ENCODE measurements at regions of chr16 and their contacts with region 1.

Region 1: GRCh38 chr16:19086322-19087199 is 19.1 kb downstream of the COQ7 start:
- DNase-seq: peak; percentile 90
- ATAC-seq: peak; percentile 98
- H3K4me3 ChIP-seq: peak overlapping the region; percentile 50 to 63
- H3K27ac ChIP-seq: peak overlapping the region; percentile 18; the same call in 1 of the 2 replicates
- H3K4me1 ChIP-seq: peaks cover 9 to 23% of the 10 kb centered on the region in 2 experiments
- H3K27me3 ChIP-seq: no peaks in the 10 kb centered on the region
- CTCF ChIP-seq: peak; percentile 94 to 98 (median 98)
- POLR2A ChIP-seq: peak; percentile 97
- RAD21 ChIP-seq: peak; percentile 100

Region 2: DNA sequence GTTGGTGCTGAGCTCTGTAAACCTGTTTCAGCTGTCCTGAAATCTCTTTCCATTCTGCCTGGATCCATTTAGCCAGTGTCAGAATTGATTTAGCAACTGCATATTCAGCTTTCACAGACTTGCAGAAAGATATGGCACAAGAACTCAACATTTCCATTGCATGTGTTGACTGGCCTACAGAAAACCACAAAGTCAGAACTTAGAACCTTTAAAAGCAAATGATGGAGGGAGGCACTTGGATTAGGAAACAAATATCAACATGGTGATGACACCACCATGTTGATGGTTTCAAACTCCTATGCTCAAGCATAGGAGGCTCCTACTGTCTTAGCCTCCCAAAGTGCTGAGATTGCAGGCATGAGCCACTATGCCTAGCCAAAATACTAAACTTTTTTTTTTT is 232.9 kb before region 1 on chr16:
- CTCF ChIA-PET with region 1: no interaction called
- POLR2A ChIA-PET with region 1: no interaction called
- RAD21 ChIA-PET with region 1: no interaction called
- intact Hi-C with region 1: no loop called
- DNase-seq: no peak
- ATAC-seq: no peak
- H3K4me3 ChIP-seq: no peak overlapping the region
- H3K27ac ChIP-seq: no peak overlapping the region
- H3K4me1 ChIP-seq: no peaks in the 10 kb centered on the region
- H3K27me3 ChIP-seq: no peaks in the 10 kb centered on the region
- CTCF ChIP-seq: no peak
- POLR2A ChIP-seq: no peak
- RAD21 ChIP-seq: no peak

Region 3: DNA sequence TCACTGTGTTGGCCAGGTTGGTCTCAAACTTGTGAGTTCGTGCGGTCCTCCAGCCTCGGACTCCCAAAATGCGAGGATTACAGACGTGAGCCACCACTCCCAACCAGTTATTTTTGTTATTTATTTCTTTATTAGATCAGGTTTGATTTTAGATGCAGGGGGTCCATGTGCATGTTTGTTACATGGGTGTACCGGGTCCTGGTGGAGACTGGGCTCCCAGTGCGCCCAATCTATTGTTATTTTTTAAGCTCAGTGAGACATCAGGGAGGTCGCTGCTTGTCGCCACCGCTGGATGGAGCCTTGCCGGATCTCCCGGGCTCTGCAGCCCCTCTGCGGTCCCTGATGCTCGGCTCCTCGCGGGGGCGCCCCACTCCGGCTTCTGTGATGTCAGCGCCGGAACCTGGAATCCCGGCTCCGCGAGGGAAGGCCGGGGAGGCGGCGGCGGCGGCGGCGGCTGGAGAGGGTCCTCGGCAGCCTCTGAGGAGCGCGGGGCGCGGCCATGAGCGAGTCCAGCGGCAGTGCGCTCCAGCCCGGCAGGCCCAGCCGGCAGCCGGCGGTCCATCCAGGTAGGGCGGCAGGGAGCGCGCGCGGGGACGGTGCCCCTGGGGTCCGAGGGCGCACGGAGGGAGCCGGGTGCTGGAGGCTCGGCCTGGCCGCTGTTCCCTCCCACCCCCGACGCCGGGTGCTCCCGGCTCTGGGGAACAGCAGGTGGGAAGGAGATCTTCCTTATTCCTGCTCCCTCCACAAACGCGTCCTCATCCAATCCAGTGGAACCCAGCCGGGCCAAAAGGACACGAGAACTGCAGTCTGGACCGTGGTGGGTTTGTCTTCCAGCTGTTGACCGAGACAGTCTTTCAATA is 102.8 kb before region 1 on chr16 and contains the start of gene TMC7:
- CTCF ChIA-PET with region 1: interaction called, 6 read pairs
- POLR2A ChIA-PET with region 1: no interaction called
- RAD21 ChIA-PET with region 1: no interaction called
- intact Hi-C with region 1: loop called (anchors 5 kb)
- DNase-seq: peak; percentile 80
- ATAC-seq: peak; percentile 94
- H3K4me3 ChIP-seq: peak within 1 kb of the TSS; percentile 58 to 68
- H3K27ac ChIP-seq: peak within 1 kb of the TSS; percentile 60
- H3K4me1 ChIP-seq: peaks cover 9 to 24% of the 10 kb centered on the region in 2 experiments; a peak in 3 of 4 replicates
- H3K27me3 ChIP-seq: no peaks in the 10 kb centered on the region
- CTCF ChIP-seq: peak; percentile 80 to 99 (median 82)
- POLR2A ChIP-seq: no peak
- RAD21 ChIP-seq: peak; percentile 97
- total RNA-seq, gene TMC7: 5.2 TPM

Region 4: DNA sequence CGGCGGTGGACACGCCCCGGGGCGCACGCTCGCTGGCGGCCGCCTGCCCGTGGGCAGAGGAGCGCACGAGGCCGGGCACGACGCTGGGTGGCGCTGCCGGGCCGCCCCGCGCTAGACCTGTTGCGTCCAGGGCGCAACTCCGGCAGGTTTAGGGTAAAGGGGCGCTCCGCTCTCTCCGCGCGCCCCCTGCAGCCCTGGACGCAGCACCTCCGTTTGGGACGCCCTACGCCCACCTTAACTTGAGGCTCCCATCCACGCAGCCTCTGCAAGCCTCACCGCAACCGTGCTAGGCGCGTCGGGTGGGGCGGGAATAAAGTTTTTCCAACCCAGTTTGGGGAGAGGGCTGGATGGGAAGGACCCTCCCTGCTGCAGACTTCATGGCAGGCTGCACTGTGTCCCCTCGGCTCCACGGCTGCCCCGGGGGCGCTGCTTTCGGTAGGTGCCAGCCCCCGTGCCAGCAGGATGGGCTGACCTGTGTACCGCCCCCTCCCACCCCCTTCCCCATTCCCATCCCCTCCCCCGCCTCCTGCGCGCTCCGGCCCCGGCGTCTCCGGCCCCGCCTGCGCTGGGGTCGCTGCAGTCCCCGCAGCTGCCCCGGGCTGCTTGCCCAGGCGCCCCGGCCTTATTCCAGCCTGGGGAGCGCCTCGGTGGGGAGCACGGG is 81.3 kb after region 1 on chr16 and contains the start of gene SYT17:
- CTCF ChIA-PET with region 1: interaction called, 3 read pairs
- POLR2A ChIA-PET with region 1: interaction called, 5 read pairs
- RAD21 ChIA-PET with region 1: no interaction called
- intact Hi-C with region 1: loop called (anchors 1 kb)
- DNase-seq: peak; percentile 60
- ATAC-seq: peak; percentile 92
- H3K4me3 ChIP-seq: peak within 1 kb of the TSS; percentile 69 to 78
- H3K27ac ChIP-seq: peak within 1 kb of the TSS; percentile 72
- H3K4me1 ChIP-seq: peaks cover 4 to 36% of the 10 kb centered on the region in 2 experiments; a peak in 3 of 4 replicates
- H3K27me3 ChIP-seq: no peaks in the 10 kb centered on the region
- CTCF ChIP-seq: peak; percentile 68 to 95 (median 69)
- POLR2A ChIP-seq: no peak
- RAD21 ChIP-seq: peak; percentile 81
- total RNA-seq, gene SYT17: 10.3 TPM

Region 5: DNA sequence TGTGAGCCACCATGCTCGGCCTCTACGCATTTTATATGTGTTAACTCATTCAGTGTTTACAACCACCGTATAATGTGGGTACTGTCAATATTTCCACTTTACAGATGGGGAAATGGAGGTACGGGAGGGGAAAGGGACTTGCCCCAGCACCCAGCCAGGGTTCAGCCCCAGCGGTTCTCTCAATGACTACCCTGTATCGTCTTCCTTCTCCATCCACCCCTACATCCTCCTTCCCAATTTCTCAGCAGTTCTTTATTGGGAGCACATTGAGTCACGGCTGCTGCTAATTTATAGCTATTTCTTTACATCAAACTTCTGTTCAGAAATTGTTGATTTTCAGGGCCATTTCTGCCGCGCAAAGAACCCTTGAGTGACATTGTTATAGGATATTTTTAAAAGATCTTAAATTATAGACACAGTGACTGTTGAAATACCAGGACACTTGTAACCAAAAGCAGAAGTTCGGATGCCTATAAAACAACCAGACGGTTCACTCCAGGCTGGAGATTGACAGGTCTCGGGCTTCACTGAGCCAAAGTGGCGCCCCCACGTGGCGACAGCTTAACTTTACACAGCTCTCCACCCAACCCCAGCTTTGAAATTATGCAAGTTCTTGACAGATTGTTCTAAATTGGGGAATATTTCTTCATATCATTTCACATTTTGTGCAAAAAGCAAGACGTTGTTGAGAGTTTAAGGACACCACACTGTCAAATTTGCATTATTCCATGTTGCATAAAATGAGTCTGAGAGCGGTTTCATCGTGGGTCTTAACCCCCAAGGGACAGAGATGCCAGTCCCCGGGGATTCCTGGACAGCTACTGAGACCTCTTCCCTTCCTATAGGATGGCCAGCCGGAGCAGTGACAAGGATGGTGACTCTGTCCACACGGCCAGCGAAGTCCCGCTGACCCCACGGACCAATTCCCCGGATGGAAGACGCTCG is 93.3 kb after region 1 on chr16:
- CTCF ChIA-PET with region 1: interaction called, 55 read pairs
- POLR2A ChIA-PET with region 1: no interaction called
- RAD21 ChIA-PET with region 1: interaction called in 1 of 2 experiments, 3 read pairs
- intact Hi-C with region 1: loop called (anchors 1 kb)
- DNase-seq: peak; percentile 31
- ATAC-seq: peak; percentile 95
- H3K4me3 ChIP-seq: no peak overlapping the region
- H3K27ac ChIP-seq: no peak overlapping the region
- H3K4me1 ChIP-seq: no peaks in the 10 kb centered on the region
- H3K27me3 ChIP-seq: no peaks in the 10 kb centered on the region
- CTCF ChIP-seq: peak; percentile 71 to 91 (median 82)
- POLR2A ChIP-seq: no peak
- RAD21 ChIP-seq: peak; percentile 67

Region 6: DNA sequence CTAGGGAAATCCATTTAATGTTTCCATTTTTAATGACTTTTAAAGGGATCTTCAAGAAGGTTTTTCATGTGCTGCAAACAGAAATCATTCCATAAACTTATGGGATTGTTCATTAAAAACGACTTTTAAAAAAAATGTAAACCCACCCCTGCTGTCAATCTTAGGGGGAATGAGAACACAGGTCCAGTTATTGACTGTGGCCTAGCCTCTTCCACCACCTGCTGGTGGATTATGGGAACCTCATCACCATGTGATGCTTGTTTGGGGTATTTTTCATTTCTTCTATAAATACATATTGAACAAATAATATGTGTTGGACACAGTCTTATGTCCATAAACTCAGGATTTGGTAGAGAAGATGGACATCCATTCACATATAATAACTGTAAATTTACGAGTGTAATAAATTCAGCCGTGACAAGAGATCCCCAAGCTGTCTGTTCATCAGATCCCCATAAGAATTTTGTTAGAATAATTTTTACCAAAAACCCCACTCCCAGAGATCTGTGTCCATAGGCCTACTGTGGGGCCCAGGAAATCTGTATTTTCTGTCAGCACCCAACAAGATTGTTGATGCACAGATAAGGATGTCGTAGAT is 289.1 kb after region 1 on chr16:
- CTCF ChIA-PET with region 1: interaction called, 9 read pairs
- POLR2A ChIA-PET with region 1: interaction called, 3 read pairs
- RAD21 ChIA-PET with region 1: no interaction called
- intact Hi-C with region 1: loop called (anchors 1 kb)
- DNase-seq: peak; percentile 60
- ATAC-seq: peak; percentile 89
- H3K4me3 ChIP-seq: no peak overlapping the region
- H3K27ac ChIP-seq: no peak overlapping the region
- H3K4me1 ChIP-seq: no peaks in the 10 kb centered on the region
- H3K27me3 ChIP-seq: no peaks in the 10 kb centered on the region
- CTCF ChIP-seq: peak; percentile 85 to 96 (median 90)
- POLR2A ChIP-seq: no peak
- RAD21 ChIP-seq: peak; percentile 99

Region 7: GRCh38 chr16:19886073-19886941 is 799.7 kb after region 1 on chr16:
- CTCF ChIA-PET with region 1: no interaction called
- POLR2A ChIA-PET with region 1: no interaction called
- RAD21 ChIA-PET with region 1: no interaction called
- intact Hi-C with region 1: loop called (anchors 10 kb)
- DNase-seq: peak; percentile 72
- ATAC-seq: peak; percentile 76
- H3K4me3 ChIP-seq: no peak overlapping the region
- H3K27ac ChIP-seq: no peak overlapping the region
- H3K4me1 ChIP-seq: peaks cover 3 to 15% of the 10 kb centered on the region in 2 experiments; a peak in 3 of 4 replicates
- H3K27me3 ChIP-seq: no peaks in the 10 kb centered on the region
- CTCF ChIP-seq: peak; percentile 93 to 100 (median 99)
- POLR2A ChIP-seq: no peak
- RAD21 ChIP-seq: peak; percentile 99